ENCODE measurements at regions of chr7 and their contacts with region 1.

Region 1: GRCh38 chr7:18290223-18290622 is 205.3 kb upstream of the HDAC9 start:
- DNase-seq: peak; percentile 36
- ATAC-seq: no peak
- H3K4me3 ChIP-seq: peak overlapping the region; percentile 48 to 92 (median 65)
- H3K4me3 Mint-ChIP-seq: peak overlapping the region; percentile 89
- H3K27ac ChIP-seq: peak overlapping the region; percentile 48 to 74
- H3K27ac Mint-ChIP-seq: peak overlapping the region; percentile 87
- H3K4me1 ChIP-seq: peaks cover 43 to 52% of the 10 kb centered on the region in 2 donors
- H3K4me1 Mint-ChIP-seq: peaks cover 58% of the 10 kb centered on the region
- H3K27me3 ChIP-seq: no peaks in the 10 kb centered on the region
- H3K27me3 Mint-ChIP-seq: no peaks in the 10 kb centered on the region
- CTCF ChIP-seq: no peak

Region 2: DNA sequence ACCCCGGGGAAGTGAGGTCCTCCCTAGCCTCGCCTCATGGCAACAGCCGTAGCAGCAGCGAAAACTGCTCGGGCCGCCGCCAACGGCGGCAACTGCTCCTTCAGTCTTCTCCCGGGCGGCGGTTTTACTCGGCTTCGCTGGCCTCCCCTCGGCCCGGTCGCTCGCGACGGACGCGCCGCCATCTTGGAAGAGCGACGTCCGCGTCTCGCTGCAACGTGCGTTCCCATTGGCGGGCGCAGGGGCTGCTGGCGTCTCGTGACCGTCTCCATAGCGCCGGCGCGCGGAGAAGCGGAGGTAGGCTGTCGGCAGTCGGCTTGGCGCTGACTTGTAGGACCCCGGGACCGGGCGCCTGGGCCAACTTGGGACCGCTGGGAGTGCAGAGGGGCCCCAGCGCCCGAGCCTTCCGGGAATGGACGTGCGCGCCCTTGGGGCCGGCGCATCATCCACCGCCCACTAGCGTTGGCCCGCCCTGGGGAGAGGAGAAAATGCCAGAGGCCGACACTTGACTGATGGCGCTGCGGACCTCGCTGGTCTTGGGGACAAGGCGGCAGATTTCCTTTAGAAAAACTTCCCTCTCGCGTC is 349.8 kb before region 1 on chr7 and contains the start of gene SNX13:
- CTCF ChIA-PET with region 1: no interaction called
- POLR2A ChIA-PET with region 1: no interaction called
- intact Hi-C with region 1: loop called (anchors 10 kb)
- DNase-seq: peak; percentile 95
- ATAC-seq: peak; percentile 90
- H3K4me3 ChIP-seq: peak within 1 kb of the TSS; percentile 81 to 96 (median 95)
- H3K4me3 Mint-ChIP-seq: peak within 1 kb of the TSS; percentile 98
- H3K27ac ChIP-seq: peak within 1 kb of the TSS; percentile 97
- H3K27ac Mint-ChIP-seq: peak within 1 kb of the TSS; percentile 99
- H3K4me1 ChIP-seq: peaks cover 14 to 22% of the 10 kb centered on the region in 2 donors
- H3K4me1 Mint-ChIP-seq: peaks cover 38% of the 10 kb centered on the region
- H3K27me3 ChIP-seq: no peaks in the 10 kb centered on the region
- H3K27me3 Mint-ChIP-seq: no peaks in the 10 kb centered on the region
- CTCF ChIP-seq: no peak
- total RNA-seq, gene SNX13: 58.1 and 62.6 TPM in 2 replicates

Region 3: GRCh38 chr7:18064242-18064838 is 225.9 kb before region 1 on chr7:
- CTCF ChIA-PET with region 1: interaction called, 3 read pairs
- POLR2A ChIA-PET with region 1: no interaction called
- intact Hi-C with region 1: loop called (anchors 10 kb)
- DNase-seq: peak; percentile 38
- ATAC-seq: no peak
- H3K4me3 ChIP-seq: no peak overlapping the region
- H3K4me3 Mint-ChIP-seq: no peak overlapping the region
- H3K27ac ChIP-seq: no peak overlapping the region
- H3K27ac Mint-ChIP-seq: no peak overlapping the region
- H3K4me1 ChIP-seq: no peaks in the 10 kb centered on the region
- H3K4me1 Mint-ChIP-seq: no peaks in the 10 kb centered on the region
- H3K27me3 ChIP-seq: no peaks in the 10 kb centered on the region
- H3K27me3 Mint-ChIP-seq: peaks cover 4% of the 10 kb centered on the region
- CTCF ChIP-seq: peak; percentile 58

Region 4: DNA sequence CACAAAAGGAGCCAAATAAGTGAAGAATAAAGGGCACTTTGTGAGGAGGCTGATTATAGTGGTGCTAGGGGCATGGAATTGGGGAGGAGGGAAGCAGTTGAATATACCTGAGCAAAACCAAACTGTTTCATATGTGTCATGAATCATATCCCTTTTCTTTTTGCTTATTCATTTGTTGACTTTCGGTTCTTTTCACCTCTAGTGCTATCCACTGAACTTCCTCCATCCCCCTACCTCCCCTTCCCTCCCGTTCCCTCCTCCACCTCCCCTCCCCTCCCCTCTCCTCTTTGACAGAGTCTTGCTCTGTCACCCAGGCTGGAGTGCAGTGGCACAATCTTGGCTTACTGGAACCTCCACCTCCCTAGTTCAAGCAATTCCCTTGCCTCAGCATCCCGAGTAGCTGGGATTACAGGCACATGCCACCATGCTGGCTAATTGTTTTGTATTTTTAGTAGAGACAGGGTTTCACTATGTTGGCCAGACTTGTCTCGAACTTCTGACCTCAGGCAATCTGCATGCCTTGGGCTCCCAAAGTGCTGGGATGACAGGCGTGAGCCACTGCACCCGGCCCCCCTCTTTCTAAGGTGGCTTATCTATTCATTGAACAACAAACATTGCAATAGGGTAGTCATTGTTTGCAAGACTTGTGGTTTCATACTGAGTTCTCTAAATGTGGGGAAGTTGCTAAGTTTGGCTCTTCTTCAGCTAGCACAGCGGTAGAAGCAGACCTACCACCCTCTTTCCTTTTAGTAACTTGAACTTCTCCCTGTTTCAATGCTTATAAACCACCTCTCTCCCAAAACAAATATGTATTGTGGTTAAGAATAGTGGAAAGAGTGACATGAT is 112.2 kb before region 1 on chr7:
- CTCF ChIA-PET with region 1: no interaction called
- POLR2A ChIA-PET with region 1: no interaction called
- intact Hi-C with region 1: no loop called
- DNase-seq: peak; percentile 46
- ATAC-seq: peak; percentile 84
- H3K4me3 ChIP-seq: peak overlapping the region in 4 of 5 experiments; percentile 4 to 19 (median 9)
- H3K4me3 Mint-ChIP-seq: peak overlapping the region; percentile 44
- H3K27ac ChIP-seq: peak overlapping the region; percentile 33 to 40
- H3K27ac Mint-ChIP-seq: peak overlapping the region; percentile 73
- H3K4me1 ChIP-seq: peaks cover 20 to 26% of the 10 kb centered on the region in 2 donors
- H3K4me1 Mint-ChIP-seq: peaks cover 44% of the 10 kb centered on the region
- H3K27me3 ChIP-seq: no peaks in the 10 kb centered on the region
- H3K27me3 Mint-ChIP-seq: no peaks in the 10 kb centered on the region
- CTCF ChIP-seq: no peak

Region 5: DNA sequence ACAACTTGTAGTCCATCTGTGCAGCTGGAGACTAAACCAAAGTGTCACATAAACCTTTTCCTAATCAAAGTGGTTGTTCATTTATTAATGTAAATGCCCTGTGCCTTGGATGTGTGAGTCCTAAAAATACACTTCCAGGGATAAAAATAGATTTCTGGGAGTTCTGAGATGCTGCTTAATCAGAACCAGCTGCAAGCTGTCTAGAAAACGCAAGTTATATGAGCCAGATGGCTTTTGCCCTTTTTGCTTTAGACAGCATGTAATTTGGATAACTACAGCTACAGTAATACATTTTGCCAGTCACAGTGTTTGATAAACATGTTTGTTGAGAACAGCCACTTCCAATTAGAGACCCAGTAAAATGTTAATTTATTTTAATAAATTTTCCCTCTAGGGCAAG is 77.5 kb before region 1 on chr7:
- CTCF ChIA-PET with region 1: interaction called, 12 read pairs
- POLR2A ChIA-PET with region 1: no interaction called
- intact Hi-C with region 1: no loop called
- DNase-seq: no peak
- ATAC-seq: no peak
- H3K4me3 ChIP-seq: no peak overlapping the region
- H3K4me3 Mint-ChIP-seq: no peak overlapping the region
- H3K27ac ChIP-seq: no peak overlapping the region
- H3K27ac Mint-ChIP-seq: no peak overlapping the region
- H3K4me1 ChIP-seq: peaks cover 6 to 7% of the 10 kb centered on the region in 2 donors
- H3K4me1 Mint-ChIP-seq: peaks cover 10% of the 10 kb centered on the region
- H3K27me3 ChIP-seq: no peaks in the 10 kb centered on the region
- H3K27me3 Mint-ChIP-seq: peaks cover 3% of the 10 kb centered on the region
- CTCF ChIP-seq: no peak

Region 6: DNA sequence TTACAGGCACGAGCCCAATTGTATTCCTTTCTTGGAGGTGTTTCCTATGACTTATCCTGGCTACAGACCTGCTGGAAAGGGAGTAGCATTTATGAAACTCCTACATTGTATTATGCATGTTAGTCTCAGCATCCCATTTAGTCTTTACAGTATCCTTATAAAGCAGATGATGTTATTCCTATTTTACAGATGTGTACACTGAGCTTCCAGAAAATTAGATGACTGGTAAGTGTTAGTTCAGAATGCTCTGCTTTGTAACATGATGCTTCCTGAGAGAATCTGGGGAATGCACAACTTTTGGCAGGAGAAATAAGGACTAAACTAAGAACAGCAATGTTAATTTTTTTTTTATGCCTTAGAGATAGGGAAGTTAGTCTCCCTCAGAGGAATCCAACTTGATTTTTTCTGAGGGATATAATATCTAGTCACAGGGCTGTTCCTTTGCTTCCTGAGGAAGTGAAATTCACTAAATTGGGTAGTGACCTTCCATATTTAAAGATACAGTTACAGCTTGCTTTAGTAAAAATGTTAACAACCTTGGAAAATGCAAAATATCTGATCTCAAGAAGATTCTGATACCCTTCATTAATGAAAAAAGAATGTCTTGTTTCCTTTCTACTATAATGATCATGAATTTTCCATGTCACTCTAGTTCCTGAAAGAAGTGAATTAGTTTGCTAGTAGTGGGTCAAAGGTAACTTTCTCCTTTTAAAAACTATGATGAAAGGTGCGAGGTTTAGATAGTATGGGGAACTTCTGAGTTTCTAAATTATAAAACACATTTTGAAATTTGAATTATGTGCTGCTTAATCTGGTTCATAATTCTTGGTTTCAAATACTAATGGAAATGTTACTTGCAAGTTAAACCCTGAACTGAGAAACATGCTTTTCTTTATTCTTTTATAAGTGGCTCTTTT is 68.6 kb before region 1 on chr7:
- CTCF ChIA-PET with region 1: interaction called, 4 read pairs
- POLR2A ChIA-PET with region 1: no interaction called
- intact Hi-C with region 1: loop called (anchors 5 kb)
- DNase-seq: no peak
- ATAC-seq: no peak
- H3K4me3 ChIP-seq: no peak overlapping the region
- H3K4me3 Mint-ChIP-seq: no peak overlapping the region
- H3K27ac ChIP-seq: peak overlapping the region in 1 of 2 donors; percentile 4
- H3K27ac Mint-ChIP-seq: peak overlapping the region; percentile 22
- H3K4me1 ChIP-seq: peaks cover 23 to 53% of the 10 kb centered on the region in 2 donors
- H3K4me1 Mint-ChIP-seq: peaks cover 54% of the 10 kb centered on the region
- H3K27me3 ChIP-seq: no peaks in the 10 kb centered on the region
- H3K27me3 Mint-ChIP-seq: no peaks in the 10 kb centered on the region
- CTCF ChIP-seq: no peak

Region 7: GRCh38 chr7:18337048-18337809 is 47.0 kb after region 1 on chr7:
- CTCF ChIA-PET with region 1: interaction called, 4 read pairs
- POLR2A ChIA-PET with region 1: no interaction called
- intact Hi-C with region 1: loop called (anchors 5 kb)
- DNase-seq: peak; percentile 42
- ATAC-seq: peak; percentile 56
- H3K4me3 ChIP-seq: peak overlapping the region in 4 of 5 experiments; percentile 3 to 58 (median 14)
- H3K4me3 Mint-ChIP-seq: peak overlapping the region; percentile 46
- H3K27ac ChIP-seq: peak overlapping the region; percentile 56 to 72
- H3K27ac Mint-ChIP-seq: peak overlapping the region; percentile 39
- H3K4me1 ChIP-seq: peaks cover 33 to 64% of the 10 kb centered on the region in 2 donors
- H3K4me1 Mint-ChIP-seq: peaks cover 67% of the 10 kb centered on the region
- H3K27me3 ChIP-seq: no peaks in the 10 kb centered on the region
- H3K27me3 Mint-ChIP-seq: no peaks in the 10 kb centered on the region
- CTCF ChIP-seq: no peak

Measured in B cell (primary cell).